B cell (primary cell): ENCODE measurements at regions of chr22 and their contacts with region 1.

Region 1: DNA sequence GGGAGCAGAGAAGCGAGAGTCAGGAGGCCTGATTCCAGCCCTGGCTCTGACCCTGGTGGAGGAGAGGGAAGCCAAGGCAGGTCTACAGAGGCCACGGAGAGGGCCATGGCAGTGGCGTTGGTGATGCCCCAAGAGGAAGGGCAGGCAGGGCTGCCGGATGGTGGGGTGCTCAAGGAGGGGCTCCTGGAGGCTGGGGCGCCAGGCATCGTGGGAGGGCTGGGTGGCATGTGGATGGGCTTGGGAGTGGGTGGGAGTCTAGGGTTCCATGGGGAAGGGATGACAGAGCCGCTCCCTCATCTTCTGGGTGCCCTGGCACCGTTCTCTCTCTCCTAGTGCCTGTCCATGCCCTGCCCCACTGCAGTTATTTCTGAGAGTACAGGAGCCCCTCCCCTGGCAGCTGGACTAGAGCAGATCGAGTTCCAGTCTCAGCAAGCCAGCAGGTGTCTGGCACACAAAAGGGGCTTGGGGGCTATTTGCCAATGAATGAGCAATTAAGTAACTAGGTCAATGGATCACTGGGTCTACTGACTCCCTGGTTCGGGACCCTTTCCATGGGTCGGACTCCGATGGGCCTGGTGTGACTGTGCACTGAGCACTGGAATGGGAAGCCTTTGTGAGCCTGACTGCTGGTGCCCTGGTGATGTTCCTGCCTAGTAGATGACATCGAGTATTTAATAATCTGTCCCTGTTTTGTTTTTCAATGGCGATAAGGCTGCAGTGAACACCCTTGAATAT is 570.0 kb downstream of the TBC1D22A start:
- DNase-seq: no peak
- ATAC-seq: no peak
- H3K4me3 ChIP-seq: no peak overlapping the region
- H3K4me3 Mint-ChIP-seq: no peak overlapping the region
- H3K27ac ChIP-seq: no peak overlapping the region
- H3K27ac Mint-ChIP-seq: no peak overlapping the region
- H3K4me1 ChIP-seq: no peaks in the 10 kb centered on the region
- H3K4me1 Mint-ChIP-seq: no peaks in the 10 kb centered on the region
- H3K27me3 ChIP-seq: no peaks in the 10 kb centered on the region
- H3K27me3 Mint-ChIP-seq: peaks cover 8% of the 10 kb centered on the region
- CTCF ChIP-seq: no peak

Region 2: GRCh38 chr22:47154621-47155081 is 177.8 kb before region 1 on chr22:
- CTCF ChIA-PET with region 1: no interaction called
- POLR2A ChIA-PET with region 1: no interaction called
- intact Hi-C with region 1: no loop called
- DNase-seq: no peak
- ATAC-seq: no peak
- H3K4me3 ChIP-seq: no peak overlapping the region
- H3K4me3 Mint-ChIP-seq: no peak overlapping the region
- H3K27ac ChIP-seq: no peak overlapping the region
- H3K27ac Mint-ChIP-seq: no peak overlapping the region
- H3K4me1 ChIP-seq: no peaks in the 10 kb centered on the region
- H3K4me1 Mint-ChIP-seq: no peaks in the 10 kb centered on the region
- H3K27me3 ChIP-seq: no peaks in the 10 kb centered on the region
- H3K27me3 Mint-ChIP-seq: no peaks in the 10 kb centered on the region
- CTCF ChIP-seq: no peak

Region 3: DNA sequence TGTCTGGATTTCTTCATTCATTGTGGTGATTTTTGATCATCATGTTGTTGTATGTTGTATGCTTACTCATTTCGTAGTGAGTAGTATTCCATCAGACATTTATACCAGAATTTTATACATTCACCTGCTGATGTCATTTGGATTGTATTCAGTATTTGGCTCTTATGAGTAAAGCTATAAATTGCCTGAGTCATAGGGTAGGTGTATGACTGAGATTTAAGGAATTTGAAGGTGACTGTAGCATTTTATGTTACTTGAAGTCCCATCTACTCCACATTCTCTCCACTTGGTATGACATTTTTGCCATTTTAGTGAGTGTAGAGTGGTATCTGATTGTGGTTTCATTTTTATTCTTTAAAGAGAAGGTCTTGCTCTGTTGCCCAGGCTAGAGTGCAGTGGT is 21.8 kb before region 1 on chr22:
- CTCF ChIA-PET with region 1: no interaction called
- POLR2A ChIA-PET with region 1: interaction called, 10 read pairs
- intact Hi-C with region 1: no loop called
- DNase-seq: no peak
- ATAC-seq: no peak
- H3K4me3 ChIP-seq: no peak overlapping the region
- H3K4me3 Mint-ChIP-seq: no peak overlapping the region
- H3K27ac ChIP-seq: no peak overlapping the region
- H3K27ac Mint-ChIP-seq: no peak overlapping the region
- H3K4me1 ChIP-seq: no peaks in the 10 kb centered on the region
- H3K4me1 Mint-ChIP-seq: no peaks in the 10 kb centered on the region
- H3K27me3 ChIP-seq: no peaks in the 10 kb centered on the region
- H3K27me3 Mint-ChIP-seq: peaks cover 9% of the 10 kb centered on the region
- CTCF ChIP-seq: no peak